ENCODE measurements at regions of chr6 and their contacts with region 1.

Region 1: GRCh38 chr6:43667245-43668150 is 20.1 kb downstream of the MRPS18A start:
- DNase-seq: peak; percentile 80 to 92 (median 84)
- ATAC-seq: peak; percentile 85
- H3K4me3 ChIP-seq: no peak overlapping the region
- H3K27ac ChIP-seq: peak overlapping the region in 1 of 2 donors; percentile 28
- H3K4me1 ChIP-seq: peaks cover 27 to 30% of the 10 kb centered on the region in 2 donors
- H3K27me3 ChIP-seq: no peaks in the 10 kb centered on the region
- CTCF ChIP-seq: peak; percentile 95 to 97

Region 2: GRCh38 chr6:43769526-43770416 is 102.3 kb after region 1 on chr6 and contains the start of gene VEGFA:
- intact Hi-C with region 1: loop called in 1 of 2 experiments (anchors 5 kb)
- DNase-seq: peak; percentile 92 to 98 (median 92)
- ATAC-seq: peak; percentile 79
- H3K4me3 ChIP-seq: peak within 1 kb of the TSS; percentile 83 to 93
- H3K27ac ChIP-seq: peak within 1 kb of the TSS; percentile 92 to 96
- H3K4me1 ChIP-seq: peaks cover 13 to 43% of the 10 kb centered on the region in 2 donors
- H3K27me3 ChIP-seq: no peaks in the 10 kb centered on the region
- CTCF ChIP-seq: peak; percentile 94 to 97
- polyA plus RNA-seq, gene VEGFA: 195 to 349 (median 326) TPM